MCF 10A (cell line): ENCODE measurements at regions of chr1 and their contacts with region 1.

Region 1: DNA sequence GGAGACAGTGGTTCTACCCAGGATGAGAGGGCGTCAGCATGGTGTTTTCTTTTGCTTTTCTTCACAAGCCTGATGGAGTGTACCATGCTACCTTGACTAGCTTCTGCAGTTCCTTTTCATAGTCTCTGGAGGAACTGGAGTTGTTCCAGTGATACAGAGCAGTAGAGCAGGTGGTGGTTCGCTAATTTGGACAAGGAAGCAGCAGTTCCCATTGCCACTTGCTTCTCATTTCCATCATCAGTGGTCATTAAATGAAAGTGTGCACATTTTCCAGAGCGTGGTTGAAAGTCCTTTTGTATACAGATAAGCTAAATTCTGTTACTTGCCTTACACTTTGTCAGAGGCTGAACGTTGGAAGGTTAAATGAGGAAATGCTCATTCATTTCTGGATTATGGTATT is 182.3 kb downstream of the C1orf21 start:
- DNase-seq: no peak
- H3K4me3 Mint-ChIP-seq: no peak overlapping the region
- H3K27ac Mint-ChIP-seq: no peak overlapping the region
- H3K4me1 Mint-ChIP-seq: peaks cover 8% of the 10 kb centered on the region
- H3K27me3 Mint-ChIP-seq: no peaks in the 10 kb centered on the region
- CTCF ChIP-seq: no peak

Region 2: DNA sequence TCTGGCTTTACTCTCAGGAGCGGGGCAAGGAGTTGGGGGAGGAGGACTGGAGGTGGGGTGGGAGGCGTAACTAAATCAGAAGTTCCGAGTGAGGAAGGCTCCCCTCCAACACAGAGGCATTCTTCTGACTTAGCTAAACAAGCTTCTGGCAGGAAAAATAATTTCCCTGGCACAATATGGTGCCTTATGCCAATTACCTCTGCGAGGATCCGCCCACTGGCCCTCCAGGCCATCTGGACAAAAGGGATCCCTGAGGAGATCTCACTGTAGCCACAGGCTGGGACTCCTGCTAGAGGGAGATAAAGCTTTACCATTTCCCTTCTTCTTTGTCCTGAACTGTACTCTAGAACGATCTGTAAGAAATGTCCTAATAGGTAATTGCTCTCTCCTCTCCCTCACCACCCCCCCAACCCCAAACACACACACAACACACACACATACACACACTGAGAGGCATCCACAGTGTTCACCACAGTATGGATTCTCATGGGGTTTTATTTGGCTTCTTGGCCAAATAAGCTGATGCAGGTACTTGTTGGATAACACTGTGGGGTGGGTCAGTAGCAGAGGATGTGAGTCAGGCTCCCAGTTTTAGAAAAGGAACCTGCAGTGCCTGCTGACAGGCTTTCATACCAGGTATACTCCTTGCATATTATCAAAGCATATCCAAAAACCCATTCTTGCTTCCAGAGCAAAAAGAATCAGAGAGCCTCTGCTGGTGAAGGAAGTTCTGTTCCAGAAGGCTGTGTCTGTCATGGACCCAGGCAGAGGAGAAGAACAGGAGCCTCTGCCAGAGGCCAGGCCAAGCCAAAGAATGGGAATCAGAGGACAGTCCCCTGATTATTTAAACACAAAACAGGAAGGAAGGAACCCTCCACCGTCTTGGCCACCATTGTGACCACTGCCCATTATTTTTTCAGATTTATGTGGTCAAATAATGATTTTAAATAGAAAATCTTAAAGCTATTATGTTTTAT is 13.2 kb before region 1 on chr1:
- CTCF ChIA-PET with region 1: interaction called, 4 read pairs
- POLR2A ChIA-PET with region 1: interaction called, 12 read pairs
- intact Hi-C with region 1: no loop called
- DNase-seq: peak; percentile 52
- H3K4me3 Mint-ChIP-seq: no peak overlapping the region
- H3K27ac Mint-ChIP-seq: peak overlapping the region; percentile 91
- H3K4me1 Mint-ChIP-seq: peaks cover 41% of the 10 kb centered on the region
- H3K27me3 Mint-ChIP-seq: no peaks in the 10 kb centered on the region
- CTCF ChIP-seq: no peak

Region 3: DNA sequence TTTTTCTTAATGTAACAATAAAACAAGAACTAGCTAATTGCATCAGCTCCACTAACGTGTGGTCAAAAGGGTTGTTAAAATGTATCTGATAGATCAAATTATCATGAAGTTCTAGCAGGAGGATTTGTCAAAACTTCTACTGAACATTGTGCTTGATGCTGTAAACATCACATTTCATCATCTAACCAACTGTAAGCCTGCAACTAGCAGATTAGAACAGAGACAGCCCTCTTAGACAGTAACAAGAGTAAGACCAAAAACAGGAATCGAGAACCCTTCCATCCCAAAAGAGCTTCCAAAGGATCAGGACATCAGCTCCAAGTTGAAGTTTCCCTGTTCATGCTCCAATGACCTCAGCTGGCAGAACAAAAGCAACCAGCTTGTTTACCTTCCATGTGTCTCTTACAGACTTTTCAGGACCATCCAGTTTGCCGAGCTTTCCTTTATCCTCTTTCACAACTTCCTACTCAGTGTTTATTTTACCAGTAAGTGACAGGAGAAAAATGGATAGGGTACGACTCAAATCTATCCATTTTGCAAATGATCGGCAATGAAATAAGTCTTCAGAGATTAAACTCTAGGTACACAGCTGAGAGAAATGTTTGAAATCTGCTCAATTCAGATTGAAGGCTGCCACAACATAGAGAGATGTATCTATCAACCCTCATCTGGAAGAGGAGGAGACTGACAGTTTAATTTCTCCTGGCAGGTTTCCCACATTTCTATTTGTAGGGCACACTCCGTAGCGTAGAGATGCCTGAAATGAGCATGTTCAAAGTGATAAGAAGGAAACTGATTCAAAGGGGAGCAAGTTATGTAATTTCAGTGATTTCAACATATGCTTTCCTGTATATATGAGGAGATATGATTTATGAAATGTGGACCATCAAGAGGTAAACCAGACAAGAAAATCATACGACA is 360.9 kb after region 1 on chr1:
- CTCF ChIA-PET with region 1: no interaction called
- POLR2A ChIA-PET with region 1: no interaction called
- intact Hi-C with region 1: no loop called
- DNase-seq: peak; percentile 14
- H3K4me3 Mint-ChIP-seq: no peak overlapping the region
- H3K27ac Mint-ChIP-seq: no peak overlapping the region
- H3K4me1 Mint-ChIP-seq: no peaks in the 10 kb centered on the region
- H3K27me3 Mint-ChIP-seq: peaks cover 97% of the 10 kb centered on the region
- CTCF ChIP-seq: no peak

Region 4: DNA sequence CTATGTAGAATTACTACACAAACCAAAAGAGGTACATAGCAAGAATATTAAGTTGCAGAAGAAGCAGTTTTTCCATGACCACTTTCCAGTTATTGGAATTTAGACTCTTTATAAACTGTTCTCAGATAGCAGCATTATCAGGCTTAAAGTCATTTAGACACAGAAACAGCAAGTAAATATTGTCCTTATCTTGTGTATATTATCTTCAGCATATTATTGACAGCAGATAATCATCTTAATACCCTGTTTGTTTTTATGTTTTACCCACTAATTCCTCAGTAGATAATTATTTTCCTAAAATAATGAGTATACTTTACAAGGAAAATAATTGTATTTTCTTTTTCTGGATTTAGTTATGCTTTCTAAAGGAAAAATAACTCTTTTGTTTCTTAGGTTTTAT is 608.3 kb after region 1 on chr1:
- CTCF ChIA-PET with region 1: no interaction called
- POLR2A ChIA-PET with region 1: no interaction called
- intact Hi-C with region 1: no loop called
- DNase-seq: no peak
- H3K4me3 Mint-ChIP-seq: no peak overlapping the region
- H3K27ac Mint-ChIP-seq: no peak overlapping the region
- H3K4me1 Mint-ChIP-seq: no peaks in the 10 kb centered on the region
- H3K27me3 Mint-ChIP-seq: no peaks in the 10 kb centered on the region
- CTCF ChIP-seq: no peak